H1 (cell line): ENCODE measurements at regions of chr1 and their contacts with region 1.

Region 1: GRCh38 chr1:182614796-182615454 is 10.7 kb upstream of the RGS16 start:
- DNase-seq: peak in 1 of 2 experiments; percentile 75
- H3K4me3 ChIP-seq: peak overlapping the region; percentile 26 to 65 (median 52)
- H3K27ac ChIP-seq: peak overlapping the region; percentile 49; the same call in 1 of the 2 replicates
- H3K4me1 ChIP-seq: peaks cover 24 to 53% (median 31%) of the 10 kb centered on the region in 4 experiments
- H3K27me3 ChIP-seq: peaks cover 0 to 29% (median 14%) of the 10 kb centered on the region in 4 experiments; a peak in 6 of 7 replicates
- CTCF ChIP-seq: no peak
- EP300 ChIP-seq: no peak
- POLR2A ChIP-seq: no peak; a peak in 1 of 3 replicates
- RAD21 ChIP-seq: no peak

Region 2: DNA sequence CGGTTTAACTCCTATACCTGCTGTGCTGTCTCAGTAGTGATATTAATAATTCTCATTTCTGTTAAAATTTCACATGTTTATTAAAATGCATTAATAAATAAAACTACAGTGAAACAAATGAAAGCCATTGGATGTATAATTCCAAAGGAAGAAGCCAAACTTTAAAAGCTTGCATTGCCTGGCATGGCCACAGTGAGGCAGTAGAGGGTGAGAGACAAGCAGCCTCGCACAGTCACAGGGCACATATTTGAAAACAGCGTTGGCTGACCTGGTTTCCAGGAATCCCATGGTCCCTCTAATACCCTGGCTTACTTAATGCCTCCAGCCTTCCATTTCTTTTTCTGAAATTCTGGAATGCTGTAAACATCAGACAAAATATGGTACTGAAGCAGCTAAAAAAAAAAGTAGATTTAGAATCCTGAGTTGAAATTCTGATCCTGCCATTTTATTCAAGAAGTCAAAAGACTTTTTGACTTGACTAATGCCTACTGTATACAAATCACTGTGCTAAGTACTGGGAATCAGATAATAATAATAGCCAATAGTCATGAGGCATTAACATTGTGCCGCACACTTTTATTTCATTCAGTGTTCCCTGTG is 19.2 kb before region 1 on chr1:
- CTCF ChIA-PET with region 1: interaction called, 118 read pairs
- POLR2A ChIA-PET with region 1: interaction called, 231 read pairs
- DNase-seq: peak in 1 of 2 experiments; percentile 90
- H3K4me3 ChIP-seq: no peak overlapping the region
- H3K27ac ChIP-seq: no peak overlapping the region
- H3K4me1 ChIP-seq: no peaks in the 10 kb centered on the region
- H3K27me3 ChIP-seq: no peaks in the 10 kb centered on the region
- CTCF ChIP-seq: peak; percentile 78 to 92 (median 87)
- EP300 ChIP-seq: no peak
- POLR2A ChIP-seq: no peak
- RAD21 ChIP-seq: peak; percentile 84 to 89

Region 3: DNA sequence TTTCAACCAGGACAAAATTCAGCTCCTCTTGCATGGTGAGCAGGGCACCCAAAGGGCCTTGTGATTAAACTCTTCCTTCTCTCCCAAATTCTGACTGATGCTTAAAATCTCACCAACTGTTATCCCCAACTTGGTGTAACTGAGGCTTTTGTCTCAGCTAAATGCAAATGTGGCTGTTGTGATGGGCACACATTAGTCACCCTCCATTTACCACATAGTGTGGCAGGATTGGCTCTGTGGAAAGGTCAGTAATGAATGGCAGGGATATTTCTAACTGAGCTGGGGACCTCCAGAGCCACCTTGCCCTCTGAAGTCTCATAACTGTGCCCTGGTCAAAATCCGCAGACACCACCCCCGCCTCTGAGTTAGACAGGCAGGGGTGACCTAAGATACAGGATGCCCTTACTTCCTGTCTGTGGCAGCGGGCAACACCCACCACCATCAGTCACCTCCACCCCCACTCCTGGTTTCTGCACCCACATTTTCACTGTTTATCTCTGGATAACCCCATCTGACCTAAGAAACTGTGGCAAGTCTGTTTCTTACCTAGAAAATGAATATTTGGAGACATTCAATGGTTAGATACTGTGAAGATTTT is 14.7 kb after region 1 on chr1:
- CTCF ChIA-PET with region 1: interaction called, 6 read pairs
- POLR2A ChIA-PET with region 1: interaction called, 107 read pairs
- DNase-seq: no peak
- H3K4me3 ChIP-seq: no peak overlapping the region
- H3K27ac ChIP-seq: no peak overlapping the region
- H3K4me1 ChIP-seq: peaks cover 6 to 21% (median 15%) of the 10 kb centered on the region in 4 experiments; a peak in 6 of 7 replicates
- H3K27me3 ChIP-seq: no peaks in the 10 kb centered on the region
- CTCF ChIP-seq: no peak
- EP300 ChIP-seq: no peak
- POLR2A ChIP-seq: no peak
- RAD21 ChIP-seq: no peak

Region 4: DNA sequence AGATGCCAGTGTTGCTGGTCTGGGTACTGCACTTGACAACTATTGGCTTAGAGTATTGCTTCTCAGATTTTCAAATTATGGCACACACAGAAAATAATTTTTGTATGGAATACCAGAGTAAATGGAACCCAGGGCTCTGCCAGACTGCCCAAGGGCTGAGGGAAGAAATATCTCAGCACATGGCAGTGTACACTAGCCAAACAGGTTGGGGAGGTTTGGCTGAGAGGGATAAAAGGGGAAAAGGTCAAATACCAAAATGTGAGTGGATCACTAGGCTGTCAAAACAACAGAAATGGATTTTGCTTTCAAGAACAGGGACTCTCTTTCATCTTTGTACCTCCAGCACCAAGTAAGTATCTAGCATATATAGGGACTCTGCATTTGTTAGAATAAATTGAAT is 72.4 kb after region 1 on chr1:
- CTCF ChIA-PET with region 1: interaction called, 4 read pairs
- POLR2A ChIA-PET with region 1: interaction called, 10 read pairs
- DNase-seq: no peak
- H3K4me3 ChIP-seq: no peak overlapping the region
- H3K27ac ChIP-seq: no peak overlapping the region
- H3K4me1 ChIP-seq: peaks cover 0 to 12% (median 4%) of the 10 kb centered on the region in 4 experiments; a peak in 6 of 7 replicates
- H3K27me3 ChIP-seq: peaks cover 0 to 19% (median 8%) of the 10 kb centered on the region in 4 experiments; a peak in 4 of 7 replicates
- CTCF ChIP-seq: no peak
- EP300 ChIP-seq: no peak
- POLR2A ChIP-seq: no peak
- RAD21 ChIP-seq: no peak

Region 5: DNA sequence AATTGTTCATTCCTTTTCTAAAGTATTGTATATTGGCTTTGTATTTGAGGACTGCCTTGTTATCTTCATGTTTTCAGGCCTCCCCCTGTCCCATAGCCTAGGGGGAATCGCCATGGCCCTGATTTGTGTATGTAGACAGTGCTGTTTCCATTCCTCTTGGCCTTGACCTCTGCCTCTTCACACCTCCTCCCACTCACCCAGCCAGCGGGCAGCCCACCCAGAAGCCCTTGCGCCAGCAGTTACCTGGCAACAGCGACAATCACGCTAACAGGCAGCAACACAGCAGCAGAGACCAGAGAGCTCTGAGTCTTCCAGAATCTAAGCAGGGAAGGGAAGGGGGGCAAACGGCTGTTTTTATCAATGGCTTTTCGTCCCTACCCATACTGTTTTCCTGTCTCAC is 124.6 kb after region 1 on chr1:
- CTCF ChIA-PET with region 1: no interaction called
- POLR2A ChIA-PET with region 1: interaction called, 11 read pairs
- DNase-seq: no peak
- H3K4me3 ChIP-seq: no peak overlapping the region
- H3K27ac ChIP-seq: no peak overlapping the region
- H3K4me1 ChIP-seq: no peaks in the 10 kb centered on the region
- H3K27me3 ChIP-seq: no peaks in the 10 kb centered on the region
- CTCF ChIP-seq: no peak
- EP300 ChIP-seq: no peak
- POLR2A ChIP-seq: no peak
- RAD21 ChIP-seq: no peak

Region 6: DNA sequence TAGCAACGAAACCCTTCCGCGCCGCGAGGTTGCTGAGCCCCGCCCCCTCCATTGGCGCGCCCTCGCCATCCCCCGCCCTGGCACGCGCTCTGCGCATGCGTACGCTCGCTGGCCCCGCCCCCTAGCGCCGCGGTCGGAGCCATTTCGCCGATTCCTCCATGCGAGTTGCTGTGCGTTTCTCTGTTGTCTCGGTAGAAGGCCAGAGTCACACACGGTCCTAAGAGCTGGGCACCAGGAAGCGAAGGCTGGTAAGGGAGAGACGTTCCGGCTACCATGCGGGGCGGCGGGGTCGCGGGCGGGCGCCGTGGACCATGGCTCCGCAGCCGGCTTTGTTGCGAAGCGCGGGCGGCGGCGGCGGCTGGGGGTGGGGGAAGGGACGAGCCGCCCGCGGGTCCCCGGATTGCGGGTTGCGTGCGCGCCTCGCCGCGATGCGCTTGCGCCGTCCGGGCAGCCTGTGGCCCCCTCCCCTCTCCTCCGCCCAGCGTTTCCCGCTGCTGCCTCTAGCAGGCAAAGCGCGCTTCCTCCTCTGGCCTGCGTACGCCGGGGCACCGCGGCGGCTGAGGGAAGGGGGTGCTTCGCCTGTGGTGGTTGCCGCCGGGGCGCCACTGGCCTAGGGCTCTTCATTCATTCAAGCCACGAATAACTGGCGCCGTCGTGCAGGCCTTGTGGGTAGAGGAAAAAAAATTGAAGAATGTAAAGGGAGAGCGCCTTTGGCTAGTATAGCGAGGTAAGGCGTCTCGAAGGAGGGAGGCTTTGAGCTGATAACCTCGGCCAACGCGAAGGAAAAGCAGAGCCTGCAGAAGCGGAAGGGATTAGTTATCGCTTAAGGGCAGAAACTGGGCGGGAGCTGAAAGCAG is 224.5 kb after region 1 on chr1 and contains the start of gene DHX9:
- CTCF ChIA-PET with region 1: no interaction called
- POLR2A ChIA-PET with region 1: interaction called, 11 read pairs
- DNase-seq: peak; percentile 69 to 99
- H3K4me3 ChIP-seq: peak within 1 kb of the TSS; percentile 88 to 99 (median 94)
- H3K27ac ChIP-seq: peak within 1 kb of the TSS; percentile 98
- H3K4me1 ChIP-seq: peaks cover 0 to 6% (median 3%) of the 10 kb centered on the region in 4 experiments; a peak in 4 of 7 replicates
- H3K27me3 ChIP-seq: no peaks in the 10 kb centered on the region
- CTCF ChIP-seq: peak; percentile 15 to 32 (median 29); a peak in 3 of 4 replicates
- EP300 ChIP-seq: no peak
- POLR2A ChIP-seq: peak; percentile 98
- RAD21 ChIP-seq: no peak
- total RNA-seq, gene DHX9: 329 and 333 TPM in 2 replicates